ENCODE measurements at regions of chr22 and their contacts with region 1.

Region 1: DNA sequence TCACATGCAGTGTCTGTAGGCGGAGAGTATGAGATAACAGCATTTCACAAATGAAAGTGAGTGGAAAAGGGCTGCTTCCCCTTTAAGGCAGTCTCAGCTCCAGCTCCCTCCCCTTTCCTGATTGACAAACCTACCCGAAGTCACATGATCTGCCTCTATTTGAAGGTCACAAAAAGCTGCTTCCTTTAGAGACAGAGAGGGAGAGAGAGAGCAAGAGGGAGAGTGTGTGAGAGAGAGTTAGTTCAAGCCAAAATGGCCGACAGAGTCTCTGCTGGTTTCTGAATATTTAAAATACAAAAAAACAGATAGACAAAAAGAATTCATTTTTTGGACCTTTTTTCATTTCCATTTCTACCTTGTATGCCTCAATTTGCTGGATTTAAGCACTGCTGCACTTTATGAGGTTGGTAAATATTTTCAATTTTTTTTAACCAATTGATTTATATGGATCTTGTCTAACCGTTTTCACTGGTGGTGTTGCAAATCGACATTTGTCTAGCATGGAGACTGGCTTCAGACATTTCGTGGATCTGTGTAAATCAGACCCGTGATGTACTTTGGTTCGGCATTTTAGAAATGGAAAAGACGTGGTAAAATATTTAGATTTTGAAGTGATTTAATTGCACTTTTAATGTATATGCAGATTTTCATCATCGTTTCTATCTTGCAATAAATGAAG is at the start of gene TNRC6B:
- DNase-seq: peak; percentile 24
- ATAC-seq: peak; percentile 86
- H3K4me3 Mint-ChIP-seq: peak within 1 kb of the TSS; percentile 87
- H3K27ac Mint-ChIP-seq: peak within 1 kb of the TSS; percentile 87
- H3K4me1 Mint-ChIP-seq: peaks cover 60% of the 10 kb centered on the region
- H3K27me3 Mint-ChIP-seq: no peaks in the 10 kb centered on the region
- CTCF ChIP-seq: no peak
- total RNA-seq, gene TNRC6B: 84.6 and 95.2 TPM in 2 replicates

Region 2: GRCh38 chr22:39471381-39472141 is 706.3 kb before region 1 on chr22:
- CTCF ChIA-PET with region 1: no interaction called
- POLR2A ChIA-PET with region 1: interaction called, 11 read pairs
- intact Hi-C with region 1: no loop called
- DNase-seq: peak; percentile 47
- ATAC-seq: peak; percentile 79
- H3K4me3 Mint-ChIP-seq: peak overlapping the region; percentile 65
- H3K27ac Mint-ChIP-seq: peak overlapping the region; percentile 90
- H3K4me1 Mint-ChIP-seq: peaks cover 73% of the 10 kb centered on the region
- H3K27me3 Mint-ChIP-seq: no peaks in the 10 kb centered on the region
- CTCF ChIP-seq: no peak

Region 3: GRCh38 chr22:39765046-39765445 is 412.8 kb before region 1 on chr22:
- CTCF ChIA-PET with region 1: no interaction called
- POLR2A ChIA-PET with region 1: no interaction called
- intact Hi-C with region 1: no loop called
- DNase-seq: no peak
- ATAC-seq: no peak
- H3K4me3 Mint-ChIP-seq: no peak overlapping the region
- H3K27ac Mint-ChIP-seq: no peak overlapping the region
- H3K4me1 Mint-ChIP-seq: peaks cover 11% of the 10 kb centered on the region
- H3K27me3 Mint-ChIP-seq: no peaks in the 10 kb centered on the region
- CTCF ChIP-seq: no peak

Region 4: DNA sequence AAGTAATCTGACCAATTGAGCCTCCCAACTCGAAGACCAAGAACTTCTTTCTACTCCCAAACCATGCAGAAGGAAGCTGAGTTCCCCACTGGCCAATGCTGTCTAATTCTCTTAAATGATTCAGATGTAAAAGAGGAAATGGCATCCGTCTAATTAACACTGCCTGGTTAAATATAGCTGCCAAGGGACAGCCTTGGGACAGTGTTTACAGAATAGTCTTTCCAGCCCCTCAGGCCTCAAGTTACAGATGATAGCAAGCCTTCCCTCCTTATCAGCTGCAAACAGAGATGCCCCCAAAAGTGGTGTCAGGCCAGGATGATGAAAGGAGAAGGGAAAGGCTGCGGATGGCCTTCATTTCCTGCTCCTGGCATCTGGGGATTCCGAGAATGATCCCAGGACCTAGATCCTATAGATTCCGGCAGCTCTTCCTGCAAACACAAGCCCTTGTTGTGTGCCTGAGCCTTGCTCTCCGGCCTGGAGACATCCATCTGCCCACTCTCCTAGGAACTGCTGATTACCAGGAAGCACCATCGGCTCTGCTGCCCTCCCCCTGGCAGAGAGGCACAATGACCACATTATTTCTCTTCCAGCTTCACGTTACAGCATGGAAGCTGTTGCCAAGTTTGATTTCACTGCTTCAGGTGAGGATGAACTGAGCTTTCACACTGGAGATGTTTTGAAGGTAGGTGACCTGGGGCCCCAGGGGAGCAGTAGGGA is 231.2 kb before region 1 on chr22:
- CTCF ChIA-PET with region 1: no interaction called
- POLR2A ChIA-PET with region 1: no interaction called
- intact Hi-C with region 1: no loop called
- DNase-seq: no peak
- ATAC-seq: peak; percentile 47
- H3K4me3 Mint-ChIP-seq: peak overlapping the region; percentile 60
- H3K27ac Mint-ChIP-seq: peak overlapping the region; percentile 16
- H3K4me1 Mint-ChIP-seq: peaks cover 86% of the 10 kb centered on the region
- H3K27me3 Mint-ChIP-seq: no peaks in the 10 kb centered on the region
- CTCF ChIP-seq: no peak

Region 5: DNA sequence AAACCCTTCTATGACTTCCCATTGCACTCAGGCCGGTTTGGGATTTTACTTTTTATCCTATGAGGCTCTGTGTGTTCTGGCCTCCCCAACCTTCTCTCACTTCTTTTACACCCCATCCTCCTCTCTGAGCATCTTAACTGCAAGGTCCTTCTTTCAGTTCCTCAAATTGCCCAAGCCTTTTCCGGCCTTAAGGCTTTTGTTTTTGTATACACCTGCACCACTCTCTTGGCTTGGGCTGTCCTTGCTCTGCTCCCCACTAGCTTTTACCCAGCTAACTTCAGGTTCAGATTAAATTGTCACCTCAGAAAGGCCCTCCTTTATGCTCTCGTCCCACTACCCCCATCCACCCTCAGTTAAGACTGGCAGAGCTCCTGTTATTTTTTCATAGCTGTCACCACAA is 127.6 kb before region 1 on chr22:
- CTCF ChIA-PET with region 1: no interaction called
- POLR2A ChIA-PET with region 1: interaction called, 114 read pairs
- intact Hi-C with region 1: no loop called
- DNase-seq: peak; percentile 28
- ATAC-seq: peak; percentile 86
- H3K4me3 Mint-ChIP-seq: peak overlapping the region; percentile 79
- H3K27ac Mint-ChIP-seq: peak overlapping the region; percentile 98
- H3K4me1 Mint-ChIP-seq: peaks cover 87% of the 10 kb centered on the region
- H3K27me3 Mint-ChIP-seq: no peaks in the 10 kb centered on the region
- CTCF ChIP-seq: no peak

Region 6: DNA sequence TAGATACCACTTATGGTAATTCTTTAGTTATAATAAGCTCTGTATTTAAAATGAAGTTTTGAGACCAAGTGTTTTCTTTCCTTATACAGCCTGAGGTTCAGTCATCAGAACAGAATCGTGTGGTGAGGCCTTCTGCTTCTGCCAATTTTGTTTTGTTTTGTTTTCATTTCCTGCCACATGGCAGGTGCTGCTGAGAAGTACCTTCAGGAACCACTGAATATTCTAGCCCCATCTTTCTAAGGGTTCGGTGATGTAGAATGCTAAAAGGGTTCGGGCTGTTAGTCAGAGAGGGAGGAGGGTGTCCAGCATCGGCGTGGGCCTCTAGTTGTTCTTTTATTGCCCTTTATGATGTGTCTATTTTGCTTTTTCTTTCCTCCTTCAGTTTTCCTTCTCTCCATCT is 25.7 kb after region 1 on chr22:
- CTCF ChIA-PET with region 1: no interaction called
- POLR2A ChIA-PET with region 1: interaction called, 3 read pairs
- intact Hi-C with region 1: loop called (anchors 2 kb)
- DNase-seq: no peak
- ATAC-seq: peak; percentile 82
- H3K4me3 Mint-ChIP-seq: peak overlapping the region; percentile 55
- H3K27ac Mint-ChIP-seq: peak overlapping the region; percentile 81
- H3K4me1 Mint-ChIP-seq: peaks cover 71% of the 10 kb centered on the region
- H3K27me3 Mint-ChIP-seq: no peaks in the 10 kb centered on the region
- CTCF ChIP-seq: no peak

Region 7: GRCh38 chr22:40210818-40211217 is 32.9 kb after region 1 on chr22:
- CTCF ChIA-PET with region 1: no interaction called
- POLR2A ChIA-PET with region 1: interaction called, 14 read pairs
- intact Hi-C with region 1: loop called (anchors 2 kb)
- DNase-seq: no peak
- ATAC-seq: peak; percentile 95
- H3K4me3 Mint-ChIP-seq: peak overlapping the region; percentile 33
- H3K27ac Mint-ChIP-seq: peak overlapping the region; percentile 76
- H3K4me1 Mint-ChIP-seq: peaks cover 76% of the 10 kb centered on the region
- H3K27me3 Mint-ChIP-seq: no peaks in the 10 kb centered on the region
- CTCF ChIP-seq: no peak

Region 8: GRCh38 chr22:40243891-40244290 is 66.0 kb after region 1 on chr22:
- CTCF ChIA-PET with region 1: no interaction called
- POLR2A ChIA-PET with region 1: no interaction called
- intact Hi-C with region 1: no loop called
- DNase-seq: no peak
- ATAC-seq: no peak
- H3K4me3 Mint-ChIP-seq: no peak overlapping the region
- H3K27ac Mint-ChIP-seq: peak overlapping the region; percentile 12
- H3K4me1 Mint-ChIP-seq: peaks cover 44% of the 10 kb centered on the region
- H3K27me3 Mint-ChIP-seq: no peaks in the 10 kb centered on the region
- CTCF ChIP-seq: no peak

Region 9: DNA sequence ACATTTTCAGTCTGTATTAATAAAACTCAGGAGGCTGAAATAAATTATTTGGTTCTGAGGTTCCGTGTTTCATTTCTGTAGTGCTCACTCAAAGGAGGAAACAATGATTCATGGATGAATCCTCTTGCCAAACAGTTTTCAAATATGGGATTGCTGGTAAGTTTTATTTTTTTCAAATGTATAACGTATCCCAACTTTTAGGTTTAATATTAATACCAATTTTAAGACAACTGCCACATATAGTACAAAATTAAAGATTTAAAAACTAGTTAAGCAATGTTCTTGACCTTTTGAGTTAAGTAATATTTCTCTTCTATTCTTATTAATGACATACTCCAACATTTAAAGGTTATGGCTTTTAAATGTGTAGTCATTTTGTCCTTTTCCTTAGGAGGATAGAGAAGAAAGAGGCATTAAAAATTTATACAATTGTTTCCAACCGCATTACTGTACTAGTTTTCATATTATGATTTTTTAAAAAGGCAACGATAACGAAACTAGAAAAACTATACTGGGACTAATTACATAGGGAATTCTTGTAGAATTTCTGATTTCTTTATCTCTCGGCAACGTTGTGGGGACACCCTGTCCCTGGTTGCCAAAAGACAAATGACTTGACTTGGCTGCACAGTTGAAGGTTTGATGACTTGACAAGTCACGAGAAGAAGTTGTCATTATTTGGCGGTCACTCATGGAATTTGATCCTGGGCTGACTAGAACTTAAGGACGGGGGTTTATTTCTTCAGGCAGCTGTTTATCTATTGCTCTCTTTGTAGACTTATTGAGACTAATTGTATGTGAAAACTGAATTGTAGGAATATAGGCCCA is 99.3 kb after region 1 on chr22:
- CTCF ChIA-PET with region 1: no interaction called
- POLR2A ChIA-PET with region 1: interaction called, 7 read pairs
- intact Hi-C with region 1: loop called (anchors 5 kb)
- DNase-seq: no peak
- ATAC-seq: no peak
- H3K4me3 Mint-ChIP-seq: no peak overlapping the region
- H3K27ac Mint-ChIP-seq: peak overlapping the region; percentile 81
- H3K4me1 Mint-ChIP-seq: peaks cover 9% of the 10 kb centered on the region
- H3K27me3 Mint-ChIP-seq: no peaks in the 10 kb centered on the region
- CTCF ChIP-seq: no peak